Pancreas (tissue), 10 donors: ENCODE measurements at regions of chr5 and their contacts with region 1.

Region 1: DNA sequence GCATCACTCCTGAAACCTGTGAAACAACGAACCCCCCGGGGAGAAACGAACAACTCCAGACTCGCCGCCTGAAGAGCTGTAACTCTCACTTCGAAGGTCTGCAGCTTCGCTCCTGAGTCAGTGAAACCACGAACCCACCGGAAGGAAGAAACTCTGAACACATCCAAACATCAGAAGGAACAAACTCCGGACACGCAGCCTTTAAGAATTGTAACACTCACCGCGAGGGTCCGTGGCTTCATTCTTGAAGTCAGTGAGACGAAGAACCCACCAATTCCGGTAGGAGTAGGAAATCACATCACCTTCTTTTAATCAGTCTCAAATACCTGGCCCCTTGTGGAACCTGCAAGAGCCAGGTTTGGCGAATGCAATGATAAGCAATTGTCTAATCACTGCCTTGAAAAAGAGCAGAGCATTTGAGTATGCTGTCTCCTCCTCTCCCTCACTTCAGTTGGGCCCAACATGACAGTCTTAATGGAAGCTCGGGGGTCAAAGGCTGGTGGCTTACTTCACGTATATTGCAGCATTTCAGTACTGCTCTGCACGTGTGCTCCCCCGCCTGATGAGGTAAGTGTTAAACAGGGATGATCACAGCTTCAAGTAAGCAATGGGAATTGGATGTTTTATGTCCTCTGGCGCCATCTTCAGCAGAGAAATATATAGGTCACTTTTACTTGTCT is 473 bp downstream of the IRGM start:
- DNase-seq: peak in 4 of 6 donors; percentile 19 to 59 (median 43)
- ATAC-seq: peak; percentile 94 to 100 (median 98)
- H3K4me3 ChIP-seq: no peak overlapping the region
- H3K27ac ChIP-seq: no peak overlapping the region
- H3K4me1 ChIP-seq: no peaks in the 10 kb centered on the region
- H3K27me3 ChIP-seq: no peaks in the 10 kb centered on the region
- CTCF ChIP-seq: peak; percentile 19 to 48 (median 40)

Region 2: GRCh38 chr5:150449517-150450339 is 397.1 kb before region 1 on chr5 and contains the start of gene RPS14:
- intact Hi-C with region 1: loop called in 1 of 3 experiments (anchors 10 kb)
- DNase-seq: peak; percentile 91 to 96 (median 94)
- ATAC-seq: peak; percentile 96 to 99 (median 98)
- H3K4me3 ChIP-seq: peak within 1 kb of the TSS; percentile 57 to 70 (median 69)
- H3K27ac ChIP-seq: peak within 1 kb of the TSS; percentile 92 to 98 (median 96)
- H3K4me1 ChIP-seq: peaks cover 7 to 17% (median 8%) of the 10 kb centered on the region in 3 donors
- H3K27me3 ChIP-seq: no peaks in the 10 kb centered on the region
- CTCF ChIP-seq: peak; percentile 84 to 86 (median 85)
- total RNA-seq, gene RPS14: 1,164 to 1,840 (median 1,380) TPM

Region 3: GRCh38 chr5:150560401-150561193 is 286.2 kb before region 1 on chr5:
- intact Hi-C with region 1: loop called in 2 of 3 experiments (anchors 5 to 10 kb)
- DNase-seq: peak in 5 of 6 donors; percentile 71 to 92 (median 77)
- ATAC-seq: peak; percentile 87 to 96 (median 92)
- H3K4me3 ChIP-seq: no peak overlapping the region
- H3K27ac ChIP-seq: no peak overlapping the region
- H3K4me1 ChIP-seq: no peaks in the 10 kb centered on the region
- H3K27me3 ChIP-seq: no peaks in the 10 kb centered on the region
- CTCF ChIP-seq: peak; percentile 90 to 96 (median 94)

Region 4: GRCh38 chr5:150700594-150701293 is 146.1 kb before region 1 on chr5 and contains the start of gene RBM22:
- intact Hi-C with region 1: loop called in 1 of 3 experiments (anchors 10 kb)
- DNase-seq: peak; percentile 87 to 96 (median 92)
- ATAC-seq: peak; percentile 99 to 100 (median 99)
- H3K4me3 ChIP-seq: peak within 1 kb of the TSS; percentile 53 to 98 (median 76)
- H3K27ac ChIP-seq: peak within 1 kb of the TSS; percentile 61 to 92 (median 88)
- H3K4me1 ChIP-seq: peaks cover 9 to 14% (median 11%) of the 10 kb centered on the region in 3 donors
- H3K27me3 ChIP-seq: no peaks in the 10 kb centered on the region
- CTCF ChIP-seq: peak in 3 of 4 donors; percentile 20 to 54 (median 29)
- total RNA-seq, gene RBM22: 14.8 to 25.9 (median 18.4) TPM

Region 5: GRCh38 chr5:150789943-150790611 is 56.7 kb before region 1 on chr5:
- intact Hi-C with region 1: loop called in 1 of 3 experiments (anchors 10 kb)
- DNase-seq: peak in 2 of 6 donors; percentile 24 to 26
- ATAC-seq: peak in 3 of 4 donors; percentile 69 to 87 (median 86)
- H3K4me3 ChIP-seq: no peak overlapping the region
- H3K27ac ChIP-seq: peak overlapping the region in 2 of 4 donors; percentile 40 to 51
- H3K4me1 ChIP-seq: peaks cover 0 to 20% (median 15%) of the 10 kb centered on the region in 3 donors
- H3K27me3 ChIP-seq: no peaks in the 10 kb centered on the region
- CTCF ChIP-seq: no peak